Activated CD4-positive, alpha-beta memory T cell treated with anti-CD3 and anti-CD28 coated beads for 36 hours (primary cell): ENCODE measurements at regions of chr6 and their contacts with region 1.

Region 1: DNA sequence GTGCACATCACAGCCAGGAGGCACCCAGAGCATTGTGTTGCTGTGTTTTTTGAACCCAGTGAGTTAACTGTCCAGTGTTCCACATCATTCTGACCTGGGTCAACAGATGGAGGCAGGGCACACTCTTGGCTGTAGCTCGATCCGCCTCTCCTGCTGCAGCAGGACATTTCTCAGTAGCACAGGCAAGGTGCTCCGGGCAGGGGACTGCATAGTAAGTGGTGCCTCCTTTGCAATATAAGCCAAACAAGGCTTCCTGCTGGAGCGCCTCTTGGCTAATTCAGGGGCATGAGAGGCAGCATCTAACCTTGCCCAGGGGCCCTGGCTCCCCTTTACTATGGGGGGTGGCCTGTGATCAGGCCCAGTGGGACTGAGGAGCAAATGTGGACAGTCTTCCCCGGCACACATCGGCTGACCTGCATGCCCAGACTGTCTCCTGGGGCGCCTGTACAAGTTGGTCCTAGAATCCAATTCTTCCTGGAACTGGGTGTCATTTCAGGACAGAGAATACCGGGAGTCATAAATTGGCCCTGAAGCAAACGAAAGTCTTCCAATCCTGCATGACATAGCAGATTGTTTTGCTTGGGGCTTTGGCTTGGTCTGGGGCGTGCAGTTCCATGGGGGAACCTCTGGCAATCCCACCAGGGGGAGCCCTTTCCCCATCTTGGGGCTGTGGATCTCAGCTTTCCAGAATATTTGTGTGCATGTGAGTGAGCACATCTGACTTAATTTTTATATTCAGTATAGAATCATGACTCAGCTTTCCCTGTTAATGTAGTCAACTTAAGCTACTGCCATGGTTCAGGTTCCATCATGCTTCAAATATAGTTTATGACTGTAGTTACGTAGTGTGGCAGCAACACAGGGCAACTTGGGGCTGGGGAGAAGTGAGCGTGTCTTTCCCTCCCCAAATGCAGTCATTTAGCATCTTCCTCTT is 56.0 kb upstream of the DDR1 start:
- DNase-seq: peak; percentile 90
- H3K4me3 Mint-ChIP-seq: peak overlapping the region; percentile 83
- H3K27ac Mint-ChIP-seq: peak overlapping the region; percentile 96
- H3K4me1 Mint-ChIP-seq: peaks cover 65% of the 10 kb centered on the region
- H3K27me3 Mint-ChIP-seq: no peaks in the 10 kb centered on the region

Region 2: DNA sequence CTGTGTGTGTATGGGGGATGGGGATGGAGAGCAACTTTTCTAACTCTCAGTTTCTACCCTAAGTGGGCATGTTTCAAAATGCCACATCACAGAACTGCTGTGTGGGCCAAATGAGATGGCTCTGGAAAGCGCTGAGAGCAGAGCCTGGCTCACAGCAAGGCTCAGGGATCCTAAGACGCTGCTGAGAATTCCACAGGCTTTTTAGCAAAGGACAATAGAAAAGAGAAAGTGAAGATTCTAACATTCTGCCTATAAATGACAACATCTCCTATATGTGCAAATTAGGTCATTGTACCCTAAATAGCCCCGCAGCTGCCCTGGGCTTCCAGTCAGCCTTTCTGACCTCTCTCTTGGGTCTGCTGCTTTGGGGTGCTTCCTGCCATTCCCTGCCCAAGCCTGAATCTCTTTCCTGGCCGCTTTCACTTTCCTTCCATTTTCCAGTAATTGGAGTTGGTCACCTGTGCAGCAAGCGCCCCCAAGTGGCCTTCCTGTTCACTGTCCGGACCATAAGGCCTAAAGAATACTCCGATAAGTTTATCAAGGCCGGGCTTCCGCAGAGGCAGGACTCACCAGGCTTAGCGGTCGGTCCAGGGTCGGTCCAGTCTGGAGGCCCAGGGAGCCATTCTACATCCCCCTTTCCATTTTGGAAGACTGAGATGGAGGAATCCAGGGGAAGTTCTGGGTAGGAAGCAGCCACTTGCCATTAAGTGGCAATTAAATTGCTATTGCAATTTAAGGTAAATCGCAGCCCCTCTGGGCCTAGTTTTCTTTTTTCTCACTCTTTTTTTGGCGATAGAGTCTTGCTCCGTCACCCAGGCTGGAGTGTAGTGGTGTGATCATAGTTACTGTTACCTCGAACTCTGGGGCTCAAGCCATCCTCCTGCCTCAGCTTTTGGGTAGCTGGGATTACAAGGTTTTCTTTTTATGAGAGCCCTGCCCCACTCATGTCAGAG is 49.4 kb after region 1 on chr6:
- CTCF ChIA-PET with region 1: interaction called, 37 read pairs
- POLR2A ChIA-PET with region 1: interaction called, 3 read pairs
- intact Hi-C with region 1: loop called (anchors 1 kb)
- DNase-seq: peak; percentile 83
- H3K4me3 Mint-ChIP-seq: peak overlapping the region; percentile 62
- H3K27ac Mint-ChIP-seq: peak overlapping the region; percentile 78
- H3K4me1 Mint-ChIP-seq: peaks cover 20% of the 10 kb centered on the region
- H3K27me3 Mint-ChIP-seq: no peaks in the 10 kb centered on the region

Region 3: GRCh38 chr6:30883685-30884520 is 55.6 kb after region 1 on chr6 and contains the start of gene DDR1:
- CTCF ChIA-PET with region 1: interaction called, 37 read pairs
- POLR2A ChIA-PET with region 1: interaction called, 3 read pairs
- intact Hi-C with region 1: no loop called
- DNase-seq: peak; percentile 61
- H3K4me3 Mint-ChIP-seq: peak within 1 kb of the TSS; percentile 70
- H3K27ac Mint-ChIP-seq: no peak within 1 kb of the TSS
- H3K4me1 Mint-ChIP-seq: peaks cover 25% of the 10 kb centered on the region
- H3K27me3 Mint-ChIP-seq: no peaks in the 10 kb centered on the region
- total RNA-seq, gene DDR1: 8.1 to 8.7 TPM

Region 4: DNA sequence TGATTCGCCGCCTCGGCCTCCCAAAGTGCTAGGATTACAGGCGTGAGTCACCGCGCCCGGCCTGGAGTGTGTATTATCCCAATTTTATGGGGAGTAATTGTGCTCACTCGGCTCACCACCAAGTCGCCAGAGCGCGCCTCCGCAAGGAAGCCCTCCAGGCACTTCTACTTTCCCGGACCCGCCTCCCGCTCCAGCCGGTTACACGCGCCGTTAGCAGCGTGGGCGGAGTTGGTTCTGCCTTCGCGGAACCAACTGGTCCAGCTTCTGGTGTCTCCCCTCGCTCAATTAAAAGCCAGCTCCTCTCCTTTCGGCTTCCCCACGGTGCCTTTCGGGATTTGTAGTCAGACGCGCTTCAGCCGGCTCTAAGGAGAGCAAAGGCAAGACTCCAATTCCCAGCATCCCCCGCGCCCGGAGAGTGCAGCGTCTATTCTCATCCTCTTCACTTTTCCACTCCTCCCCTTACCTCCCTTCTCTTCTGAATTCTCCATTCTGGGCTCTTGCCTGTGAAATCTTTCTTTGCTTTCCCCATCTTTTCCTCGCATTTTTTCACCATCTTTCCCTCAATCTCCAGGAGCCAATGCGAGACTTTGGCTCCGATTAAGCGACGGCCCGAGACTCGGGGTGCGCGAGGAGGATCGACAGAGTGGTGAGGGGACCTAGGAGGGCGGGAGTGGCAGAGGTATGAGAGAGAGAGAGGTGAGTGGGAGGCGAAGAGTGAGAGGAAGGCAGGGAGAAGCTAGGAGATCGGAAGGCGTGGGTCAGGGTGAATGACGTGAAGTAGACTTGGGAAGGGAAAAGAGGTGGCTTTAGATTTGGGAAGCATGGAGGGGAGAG is 79.7 kb after region 1 on chr6 and contains the start of gene GTF2H4:
- CTCF ChIA-PET with region 1: interaction called, 63 read pairs
- POLR2A ChIA-PET with region 1: interaction called, 8 read pairs
- intact Hi-C with region 1: no loop called
- DNase-seq: peak; percentile 97
- H3K4me3 Mint-ChIP-seq: peak within 1 kb of the TSS; percentile 95
- H3K27ac Mint-ChIP-seq: peak within 1 kb of the TSS; percentile 77
- H3K4me1 Mint-ChIP-seq: peaks cover 16% of the 10 kb centered on the region
- H3K27me3 Mint-ChIP-seq: no peaks in the 10 kb centered on the region
- total RNA-seq, gene GTF2H4: 35.2 to 39.2 TPM

Region 5: GRCh38 chr6:30914076-30914853 is 86.0 kb after region 1 on chr6 and contains the start of gene VARS2:
- CTCF ChIA-PET with region 1: interaction called, 63 read pairs
- POLR2A ChIA-PET with region 1: interaction called, 8 read pairs
- intact Hi-C with region 1: loop called (anchors 2 kb)
- DNase-seq: peak; percentile 93
- H3K4me3 Mint-ChIP-seq: peak within 1 kb of the TSS; percentile 94
- H3K27ac Mint-ChIP-seq: peak within 1 kb of the TSS; percentile 82
- H3K4me1 Mint-ChIP-seq: peaks cover 29% of the 10 kb centered on the region
- H3K27me3 Mint-ChIP-seq: no peaks in the 10 kb centered on the region
- total RNA-seq, gene VARS2: 56.9 to 68.9 TPM

Region 6: DNA sequence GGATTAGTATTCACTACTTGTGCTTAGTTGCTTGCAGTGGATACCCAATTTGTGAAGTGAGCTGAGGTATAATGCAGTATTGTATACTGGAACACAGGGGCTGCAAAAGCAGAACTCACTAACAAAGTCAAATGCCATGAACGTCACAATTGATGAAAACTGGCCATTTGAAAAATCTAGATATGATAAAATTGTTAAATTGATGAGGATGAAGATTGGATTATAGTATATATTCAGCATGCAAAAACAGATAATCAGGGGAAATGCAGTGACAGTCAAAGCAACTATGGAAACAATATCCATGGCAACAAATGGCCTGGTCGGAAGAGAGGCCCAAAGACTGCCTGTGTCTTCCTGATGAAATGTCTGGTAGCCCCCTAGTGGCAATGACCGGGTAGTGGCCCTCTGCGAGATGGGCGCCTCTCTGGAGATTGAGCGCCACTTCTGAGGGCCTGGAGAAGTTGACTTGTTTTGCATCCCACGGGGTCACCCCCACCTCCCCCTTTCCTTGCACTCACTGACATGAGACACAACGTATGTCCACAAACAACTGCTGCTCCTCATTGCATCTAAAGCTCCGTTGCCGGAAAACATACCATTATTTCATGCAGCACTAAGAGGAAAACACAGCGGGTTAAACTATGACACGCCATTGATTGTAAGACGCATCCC is 240.5 kb after region 1 on chr6:
- CTCF ChIA-PET with region 1: interaction called, 14 read pairs
- POLR2A ChIA-PET with region 1: no interaction called
- intact Hi-C with region 1: no loop called
- DNase-seq: peak; percentile 81
- H3K4me3 Mint-ChIP-seq: no peak overlapping the region
- H3K27ac Mint-ChIP-seq: no peak overlapping the region
- H3K4me1 Mint-ChIP-seq: no peaks in the 10 kb centered on the region
- H3K27me3 Mint-ChIP-seq: no peaks in the 10 kb centered on the region

Region 7: GRCh38 chr6:31087494-31088089 is 259.3 kb after region 1 on chr6:
- CTCF ChIA-PET with region 1: interaction called, 44 read pairs
- POLR2A ChIA-PET with region 1: no interaction called
- intact Hi-C with region 1: loop called (anchors 2 kb)
- DNase-seq: peak; percentile 92
- H3K4me3 Mint-ChIP-seq: peak overlapping the region; percentile 12
- H3K27ac Mint-ChIP-seq: peak overlapping the region; percentile 45
- H3K4me1 Mint-ChIP-seq: peaks cover 11% of the 10 kb centered on the region
- H3K27me3 Mint-ChIP-seq: no peaks in the 10 kb centered on the region

Region 8: DNA sequence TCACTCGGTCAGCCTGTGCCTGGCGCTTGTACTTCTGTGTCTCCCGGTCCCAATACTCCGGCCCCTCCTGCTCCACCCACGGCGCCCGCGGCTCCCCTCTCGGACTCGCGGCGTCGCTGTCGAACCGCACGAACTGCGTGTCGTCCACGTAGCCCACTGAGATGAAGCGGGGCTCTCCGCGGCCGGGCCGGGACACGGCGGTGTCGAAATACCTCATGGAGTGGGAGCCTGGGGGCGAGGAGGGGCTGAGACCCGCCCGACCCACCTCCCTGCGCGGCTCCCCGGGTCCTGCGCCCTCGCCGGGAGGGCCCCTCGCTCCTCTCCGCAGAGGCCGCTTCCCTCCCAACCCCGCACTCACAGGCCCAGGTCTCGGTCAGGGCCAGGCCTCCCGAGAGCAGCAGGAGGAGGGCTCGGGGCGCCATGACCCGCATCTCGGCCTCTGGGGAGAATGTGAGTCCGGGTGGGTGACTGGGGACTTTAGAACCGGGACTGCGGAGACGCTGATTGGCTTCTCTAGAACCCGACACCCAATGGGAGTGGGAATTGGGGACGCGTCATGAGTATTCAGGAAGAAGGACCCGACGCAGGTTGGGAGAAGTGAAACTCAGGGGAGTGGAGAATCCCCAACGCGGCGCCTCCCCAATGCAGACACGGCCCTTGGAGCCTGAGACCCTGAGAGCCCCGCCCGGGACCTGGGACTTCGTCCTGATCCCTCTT is 443.5 kb after region 1 on chr6 and contains the start of gene HLA-C:
- CTCF ChIA-PET with region 1: no interaction called
- POLR2A ChIA-PET with region 1: no interaction called
- intact Hi-C with region 1: no loop called
- DNase-seq: peak; percentile 95
- H3K4me3 Mint-ChIP-seq: peak within 1 kb of the TSS; percentile 95
- H3K27ac Mint-ChIP-seq: peak within 1 kb of the TSS; percentile 99
- H3K4me1 Mint-ChIP-seq: peaks cover 51% of the 10 kb centered on the region
- H3K27me3 Mint-ChIP-seq: no peaks in the 10 kb centered on the region
- total RNA-seq, gene HLA-C: 976 to 983 TPM